Heart left ventricle (tissue), 16 donors: ENCODE measurements at regions of chr9 and their contacts with region 1.

Region 1: DNA sequence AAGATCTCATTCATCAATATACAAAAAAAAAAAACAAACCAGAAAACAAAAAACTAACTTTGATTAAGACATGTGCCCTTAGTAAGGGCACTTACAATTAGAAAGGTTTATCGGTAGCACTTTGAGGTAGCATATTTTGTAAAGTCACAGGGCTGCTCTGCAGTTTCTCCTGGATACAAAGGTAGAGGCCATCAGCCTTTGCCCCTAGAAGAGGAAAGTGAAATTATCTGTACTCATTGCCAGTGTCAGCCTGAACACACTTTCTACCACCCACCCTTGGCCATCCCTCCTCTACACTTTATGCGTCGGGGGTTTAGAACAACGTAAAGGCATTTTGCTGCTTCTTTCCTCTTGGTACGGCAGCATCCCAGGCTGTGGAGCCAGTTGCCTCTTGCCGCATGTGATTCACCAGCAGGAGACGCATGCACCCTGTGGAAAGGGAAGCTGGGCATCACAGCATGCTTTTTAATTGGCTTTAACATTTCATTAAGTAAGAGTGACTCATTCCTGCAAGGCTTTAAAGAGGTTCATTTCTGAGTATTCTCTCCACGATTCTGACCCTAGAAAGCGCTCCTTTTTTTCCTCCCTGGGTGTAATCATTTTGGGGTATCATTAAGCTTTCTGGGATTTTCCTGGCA is 84.6 kb downstream of the CEMIP2 start:
- DNase-seq: peak in 1 of 5 donors; percentile 18
- ATAC-seq: peak in 3 of 4 donors; percentile 25 to 41 (median 30)
- H3K4me3 ChIP-seq: no peak overlapping the region
- H3K27ac ChIP-seq: peak overlapping the region in 1 of 12 donors; percentile 73
- H3K4me1 ChIP-seq: peaks cover 0 to 68% (median 19%) of the 10 kb centered on the region in 12 donors
- H3K27me3 ChIP-seq: no peaks in the 10 kb centered on the region
- CTCF ChIP-seq: peak in 5 of 12 donors; percentile 6 to 32 (median 26)
- POLR2A ChIP-seq: no peak

Region 2: GRCh38 chr9:71638627-71639026 is 45.1 kb before region 1 on chr9:
- intact Hi-C with region 1: loop called in 2 of 10 experiments (anchors 5 to 10 kb)
- DNase-seq: peak in 4 of 5 donors; percentile 46 to 57 (median 53)
- ATAC-seq: peak; percentile 86 to 96 (median 94)
- H3K4me3 ChIP-seq: peak overlapping the region in 1 of 12 donors; percentile 6
- H3K27ac ChIP-seq: peak overlapping the region; percentile 9 to 92 (median 55)
- H3K4me1 ChIP-seq: peaks cover 0 to 58% (median 0%) of the 10 kb centered on the region in 12 donors
- H3K27me3 ChIP-seq: no peaks in the 10 kb centered on the region
- CTCF ChIP-seq: no peak
- POLR2A ChIP-seq: no peak

Region 3: GRCh38 chr9:71737455-71737854 is 53.7 kb after region 1 on chr9:
- intact Hi-C with region 1: no loop called
- DNase-seq: no peak
- ATAC-seq: peak in 2 of 4 donors; percentile 34 to 67
- H3K4me3 ChIP-seq: no peak overlapping the region
- H3K27ac ChIP-seq: no peak overlapping the region
- H3K4me1 ChIP-seq: peaks cover 0 to 6% (median 0%) of the 10 kb centered on the region in 12 donors
- H3K27me3 ChIP-seq: no peaks in the 10 kb centered on the region
- CTCF ChIP-seq: no peak
- POLR2A ChIP-seq: no peak